ENCODE measurements at regions of chr13 and their contacts with region 1.

Region 1: GRCh38 chr13:45292176-45292575 is 48.8 kb downstream of the TPT1 start:
- DNase-seq: peak; percentile 73
- H3K4me3 Mint-ChIP-seq: no peak overlapping the region
- H3K27ac Mint-ChIP-seq: peak overlapping the region; percentile 77
- H3K4me1 Mint-ChIP-seq: peaks cover 30% of the 10 kb centered on the region
- H3K27me3 Mint-ChIP-seq: no peaks in the 10 kb centered on the region
- CTCF ChIP-seq: no peak

Region 2: GRCh38 chr13:45280751-45281634 is 11.2 kb before region 1 on chr13:
- CTCF ChIA-PET with region 1: interaction called, 10 read pairs
- intact Hi-C with region 1: no loop called
- DNase-seq: peak; percentile 77
- H3K4me3 Mint-ChIP-seq: no peak overlapping the region
- H3K27ac Mint-ChIP-seq: no peak overlapping the region
- H3K4me1 Mint-ChIP-seq: no peaks in the 10 kb centered on the region
- H3K27me3 Mint-ChIP-seq: no peaks in the 10 kb centered on the region
- CTCF ChIP-seq: peak; percentile 60

Region 3: GRCh38 chr13:45385320-45385719 is 93.1 kb after region 1 on chr13:
- CTCF ChIA-PET with region 1: no interaction called
- intact Hi-C with region 1: no loop called
- DNase-seq: no peak
- H3K4me3 Mint-ChIP-seq: no peak overlapping the region
- H3K27ac Mint-ChIP-seq: no peak overlapping the region
- H3K4me1 Mint-ChIP-seq: no peaks in the 10 kb centered on the region
- H3K27me3 Mint-ChIP-seq: no peaks in the 10 kb centered on the region
- CTCF ChIP-seq: no peak

Region 4: DNA sequence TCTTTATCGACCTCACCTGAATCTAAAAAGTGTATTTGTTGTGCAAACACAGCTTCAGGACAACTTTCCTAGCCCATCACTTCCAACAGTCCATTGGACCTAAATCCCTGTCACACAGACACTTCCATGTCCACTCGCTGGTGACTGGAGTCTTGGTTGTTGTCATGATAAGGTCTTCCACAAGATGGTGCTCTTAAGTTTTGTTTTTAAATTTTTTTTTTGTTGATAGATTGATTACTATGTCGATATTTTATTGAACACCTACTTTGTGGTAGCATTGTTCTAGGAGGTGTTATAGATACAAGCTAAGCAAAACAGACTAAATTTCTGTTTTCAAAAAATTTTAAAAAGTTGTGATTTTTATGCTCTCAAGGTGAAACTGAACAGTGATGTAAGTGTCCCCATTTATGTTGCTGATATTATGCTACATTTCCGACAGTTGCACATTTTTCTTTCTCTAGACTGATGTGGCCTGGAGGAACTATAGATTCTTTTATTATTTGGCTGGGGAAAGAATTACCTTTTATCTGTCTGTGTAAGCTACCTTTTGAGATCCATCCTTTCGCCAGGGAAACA is 331.4 kb after region 1 on chr13:
- CTCF ChIA-PET with region 1: no interaction called
- intact Hi-C with region 1: no loop called
- DNase-seq: no peak
- H3K4me3 Mint-ChIP-seq: no peak overlapping the region
- H3K27ac Mint-ChIP-seq: no peak overlapping the region
- H3K4me1 Mint-ChIP-seq: no peaks in the 10 kb centered on the region
- H3K27me3 Mint-ChIP-seq: peaks cover 90% of the 10 kb centered on the region
- CTCF ChIP-seq: peak; percentile 28